Heart right ventricle (tissue), 16 donors: ENCODE measurements at regions of chr2 and their contacts with region 1.

Region 1: GRCh38 chr2:113342650-113343049 is 63.9 kb upstream of the PAX8 start:
- DNase-seq: no peak
- ATAC-seq: peak in 4 of 8 donors; percentile 39 to 66 (median 48)
- H3K4me3 ChIP-seq: no peak overlapping the region
- H3K27ac ChIP-seq: no peak overlapping the region
- H3K4me1 ChIP-seq: peaks cover 0 to 10% (median 0%) of the 10 kb centered on the region in 9 donors
- H3K27me3 ChIP-seq: peaks cover 0 to 6% (median 0%) of the 10 kb centered on the region in 7 donors
- CTCF ChIP-seq: no peak

Region 2: DNA sequence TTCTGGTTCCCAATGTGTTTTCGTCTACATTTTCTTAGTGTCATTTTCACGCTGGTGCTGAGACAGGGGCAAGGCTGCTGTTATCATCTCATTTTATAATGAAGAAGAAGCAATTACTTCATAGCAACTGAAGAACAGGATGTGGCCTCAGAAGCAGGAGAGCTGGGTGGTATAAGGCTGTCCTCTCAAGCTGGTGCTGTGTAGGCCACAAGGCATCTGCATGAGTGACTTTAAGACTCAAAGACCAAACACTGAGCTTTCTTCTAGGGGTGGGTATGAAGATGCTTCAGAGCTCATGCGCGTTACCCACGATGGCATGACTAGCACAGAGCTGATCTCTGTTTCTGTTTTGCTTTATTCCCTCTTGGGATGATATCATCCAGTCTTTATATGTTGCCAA is 357.6 kb before region 1 on chr2:
- intact Hi-C with region 1: no loop called
- DNase-seq: no peak
- ATAC-seq: no peak
- H3K4me3 ChIP-seq: no peak overlapping the region
- H3K27ac ChIP-seq: no peak overlapping the region
- H3K4me1 ChIP-seq: no peaks in the 10 kb centered on the region
- H3K27me3 ChIP-seq: peaks cover 0 to 16% (median 0%) of the 10 kb centered on the region in 7 donors
- CTCF ChIP-seq: no peak

Region 3: DNA sequence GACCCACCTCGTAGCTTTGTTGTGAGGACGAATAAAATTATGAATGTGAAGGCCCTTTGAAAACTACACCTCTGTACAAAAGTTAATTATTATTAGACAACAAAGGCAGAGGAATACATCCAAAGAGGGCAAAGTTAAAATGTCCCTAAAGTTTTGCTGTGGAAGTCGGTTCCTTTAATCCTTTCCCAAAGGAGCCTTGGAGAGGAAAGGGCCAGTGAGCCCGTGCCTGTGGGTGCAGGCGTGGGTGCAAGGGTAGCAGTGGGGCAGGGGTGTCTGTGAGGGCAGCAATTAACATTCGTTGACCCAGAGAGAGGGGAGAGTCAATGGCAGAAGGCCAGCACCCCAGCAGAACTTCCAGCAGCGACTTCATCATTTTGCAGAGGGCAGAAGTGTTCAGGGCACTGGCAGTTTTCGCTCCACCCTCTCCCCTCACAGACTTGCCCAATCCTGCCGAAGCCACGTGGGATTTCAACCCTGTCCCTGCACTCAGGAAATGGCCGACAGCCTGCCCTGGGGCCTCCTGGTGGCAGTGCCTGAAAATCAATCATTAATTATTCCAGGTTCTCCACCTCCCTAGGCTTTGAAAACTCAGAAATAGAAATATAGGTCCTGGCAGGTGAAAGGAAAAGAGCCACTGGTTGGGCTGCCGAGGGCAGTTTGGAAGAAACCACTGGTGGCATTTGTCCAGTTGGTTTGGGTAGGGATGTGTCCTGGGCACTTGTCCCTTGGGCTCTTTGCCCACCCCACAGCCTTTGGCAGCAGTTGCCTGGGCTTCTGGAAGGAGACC is 59.7 kb before region 1 on chr2:
- intact Hi-C with region 1: loop called in 2 of 10 experiments (anchors 2 kb)
- DNase-seq: peak; percentile 19 to 39
- ATAC-seq: peak in 7 of 8 donors; percentile 48 to 67 (median 54)
- H3K4me3 ChIP-seq: no peak overlapping the region
- H3K27ac ChIP-seq: peak overlapping the region in 8 of 10 donors; percentile 2 to 62 (median 40)
- H3K4me1 ChIP-seq: peaks cover 4 to 24% (median 20%) of the 10 kb centered on the region in 9 donors
- H3K27me3 ChIP-seq: peaks cover 4 to 30% (median 19%) of the 10 kb centered on the region in 7 donors
- CTCF ChIP-seq: peak in 5 of 9 donors; percentile 9 to 36 (median 28)